Naive thymus-derived CD4-positive, alpha-beta T cell (primary cell): ENCODE measurements at regions of chr2 and their contacts with region 1.

Region 1: GRCh38 chr2:42286268-42286946 is 74.6 kb downstream of the COX7A2L start:
- DNase-seq: no peak
- ATAC-seq: no peak
- H3K4me3 ChIP-seq: no peak overlapping the region
- H3K4me3 Mint-ChIP-seq: no peak overlapping the region
- H3K27ac ChIP-seq: no peak overlapping the region
- H3K27ac Mint-ChIP-seq: peak overlapping the region in 8 of 9 donors; percentile 5 to 91 (median 76)
- H3K4me1 ChIP-seq: peaks cover 6 to 8% of the 10 kb centered on the region in 2 donors
- H3K4me1 Mint-ChIP-seq: peaks cover 6 to 41% (median 20%) of the 10 kb centered on the region in 7 donors
- H3K27me3 ChIP-seq: no peaks in the 10 kb centered on the region
- H3K27me3 Mint-ChIP-seq: no peaks in the 10 kb centered on the region

Region 2: GRCh38 chr2:41803361-41803760 is 483.0 kb before region 1 on chr2:
- CTCF ChIA-PET with region 1: no interaction called
- POLR2A ChIA-PET with region 1: no interaction called
- intact Hi-C with region 1: no loop called
- DNase-seq: no peak
- ATAC-seq: no peak
- H3K4me3 ChIP-seq: no peak overlapping the region
- H3K4me3 Mint-ChIP-seq: no peak overlapping the region
- H3K27ac ChIP-seq: no peak overlapping the region
- H3K27ac Mint-ChIP-seq: no peak overlapping the region
- H3K4me1 ChIP-seq: no peaks in the 10 kb centered on the region
- H3K4me1 Mint-ChIP-seq: no peaks in the 10 kb centered on the region
- H3K27me3 ChIP-seq: peaks cover 0 to 3% of the 10 kb centered on the region in 2 donors
- H3K27me3 Mint-ChIP-seq: peaks cover 1 to 70% (median 58%) of the 10 kb centered on the region in 5 donors

Region 3: DNA sequence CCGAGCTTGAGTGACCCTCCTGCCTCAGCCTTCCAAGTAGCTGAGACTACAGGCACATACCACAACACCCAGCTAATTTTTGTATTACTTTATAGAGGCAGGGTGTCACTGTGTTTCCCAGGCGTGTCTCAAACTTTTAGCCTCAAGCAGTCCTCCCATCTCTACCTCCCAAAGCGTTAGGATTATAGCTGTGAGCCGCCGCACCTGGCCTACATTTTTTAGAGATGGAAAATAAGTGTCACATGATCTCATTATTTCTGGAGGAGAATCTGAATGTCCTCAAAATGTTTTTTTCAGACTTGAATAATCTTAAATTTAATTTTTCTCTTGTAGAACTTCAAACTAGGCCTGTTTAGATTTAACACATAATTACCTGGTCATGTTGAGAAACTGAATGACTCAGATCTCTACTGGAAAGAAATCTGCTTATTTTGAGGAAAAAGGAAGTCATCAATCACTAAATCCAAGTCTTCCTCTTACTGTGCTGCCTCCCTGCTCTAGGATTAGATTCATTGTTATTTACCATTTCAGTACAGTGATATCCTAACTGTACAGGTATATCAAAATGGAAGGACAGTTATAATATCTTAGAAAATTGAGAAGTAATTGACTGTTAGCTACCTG is 17.8 kb before region 1 on chr2:
- CTCF ChIA-PET with region 1: no interaction called
- POLR2A ChIA-PET with region 1: no interaction called
- intact Hi-C with region 1: loop called in 1 of 2 experiments (anchors 2 kb)
- DNase-seq: no peak
- ATAC-seq: no peak
- H3K4me3 ChIP-seq: no peak overlapping the region
- H3K4me3 Mint-ChIP-seq: no peak overlapping the region
- H3K27ac ChIP-seq: no peak overlapping the region
- H3K27ac Mint-ChIP-seq: peak overlapping the region in 3 of 9 donors; percentile 19 to 74 (median 57)
- H3K4me1 ChIP-seq: peaks cover 4 to 11% of the 10 kb centered on the region in 2 donors
- H3K4me1 Mint-ChIP-seq: peaks cover 0 to 43% (median 19%) of the 10 kb centered on the region in 7 donors
- H3K27me3 ChIP-seq: no peaks in the 10 kb centered on the region
- H3K27me3 Mint-ChIP-seq: no peaks in the 10 kb centered on the region

Region 4: DNA sequence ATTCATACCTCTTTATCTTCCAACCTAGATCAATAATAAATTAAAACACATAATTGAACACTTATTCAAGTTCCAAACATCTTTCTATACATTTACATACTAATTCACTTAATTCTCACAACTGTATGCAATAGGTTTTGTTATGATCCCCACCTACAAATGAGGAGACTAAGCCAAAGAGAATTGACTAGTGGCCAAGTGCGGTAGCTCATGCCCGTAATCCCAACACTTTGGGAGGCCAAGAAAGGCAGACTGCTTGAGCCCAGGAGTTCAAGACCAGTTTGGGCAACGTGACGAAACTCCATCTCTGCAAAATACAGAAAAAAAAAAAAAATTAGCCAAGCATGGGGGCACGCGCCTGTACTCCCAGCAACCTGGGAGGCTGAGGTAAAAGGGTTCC is 170.6 kb after region 1 on chr2:
- CTCF ChIA-PET with region 1: no interaction called
- POLR2A ChIA-PET with region 1: no interaction called
- intact Hi-C with region 1: no loop called
- DNase-seq: no peak
- ATAC-seq: no peak
- H3K4me3 ChIP-seq: no peak overlapping the region
- H3K4me3 Mint-ChIP-seq: no peak overlapping the region
- H3K27ac ChIP-seq: no peak overlapping the region
- H3K27ac Mint-ChIP-seq: no peak overlapping the region
- H3K4me1 ChIP-seq: no peaks in the 10 kb centered on the region
- H3K4me1 Mint-ChIP-seq: peaks cover 0 to 2% (median 0%) of the 10 kb centered on the region in 7 donors
- H3K27me3 ChIP-seq: no peaks in the 10 kb centered on the region
- H3K27me3 Mint-ChIP-seq: peaks cover 0 to 19% (median 4%) of the 10 kb centered on the region in 5 donors